ENCODE measurements at regions of chr6 and their contacts with region 1.

Region 1: DNA sequence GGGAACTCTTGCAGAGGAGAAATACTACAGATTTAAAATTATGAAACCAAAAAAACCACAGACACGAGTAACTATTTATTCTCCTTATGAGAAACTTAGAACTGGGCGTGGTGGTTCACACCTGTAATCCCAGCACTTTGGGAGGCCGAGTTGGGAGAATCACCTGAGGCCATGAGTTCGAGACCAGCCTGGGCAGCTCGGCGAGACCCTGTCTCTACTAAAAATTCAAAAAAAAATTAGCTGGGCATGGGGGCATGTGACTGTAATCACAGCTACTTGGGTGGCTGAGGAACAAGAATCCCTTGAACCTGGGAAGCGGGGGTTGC is 36.8 kb downstream of the SSR1 start:
- DNase-seq: no peak
- ATAC-seq: no peak
- H3K4me3 ChIP-seq: no peak overlapping the region
- H3K4me3 Mint-ChIP-seq: no peak overlapping the region
- H3K27ac ChIP-seq: no peak overlapping the region
- H3K27ac Mint-ChIP-seq: no peak overlapping the region
- H3K4me1 ChIP-seq: no peaks in the 10 kb centered on the region
- H3K4me1 Mint-ChIP-seq: peaks cover 6% of the 10 kb centered on the region
- H3K27me3 ChIP-seq: no peaks in the 10 kb centered on the region
- H3K27me3 Mint-ChIP-seq: no peaks in the 10 kb centered on the region
- CTCF ChIP-seq: peak; percentile 37

Region 2: DNA sequence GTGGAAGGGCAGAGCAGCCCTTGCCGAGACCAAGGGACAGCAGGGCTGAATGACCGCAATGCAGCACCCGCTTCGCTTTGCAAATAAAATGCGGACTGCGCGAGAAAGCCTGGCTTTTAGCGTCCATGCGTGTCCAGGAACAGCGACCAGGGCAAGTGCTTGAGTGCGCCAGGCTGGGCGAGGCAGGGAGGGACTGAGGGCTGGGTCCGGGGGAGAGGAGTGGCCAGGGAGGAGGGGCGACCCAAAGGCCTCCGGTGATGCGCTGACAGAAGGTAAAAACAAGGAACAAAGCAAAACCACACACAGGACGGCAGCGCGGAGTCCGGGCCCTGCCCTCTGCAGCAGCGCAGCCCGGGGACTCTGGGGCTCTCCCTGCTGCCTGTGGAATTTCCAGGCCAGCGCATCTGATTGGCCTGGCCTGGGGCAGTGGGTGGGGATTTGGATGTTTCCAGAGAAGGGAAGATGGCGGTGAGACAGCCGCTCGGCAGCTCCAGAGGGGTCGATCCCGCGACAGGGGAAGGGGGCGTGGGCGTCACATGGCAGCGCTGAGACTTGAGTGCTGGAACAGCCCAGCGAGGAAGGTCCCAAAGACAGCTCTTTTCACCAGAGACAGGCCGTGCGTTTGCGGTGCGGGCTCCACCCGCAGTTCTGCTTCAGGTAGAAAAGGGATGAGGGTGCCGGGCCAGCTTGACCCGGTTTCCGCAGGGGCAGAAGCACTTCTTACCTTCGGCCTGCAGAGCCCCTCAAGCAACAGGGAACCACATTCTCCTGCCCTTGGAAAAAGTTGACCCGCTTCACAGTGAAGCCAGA is 14.9 kb before region 1 on chr6:
- CTCF ChIA-PET with region 1: interaction called, 25 read pairs
- POLR2A ChIA-PET with region 1: no interaction called
- intact Hi-C with region 1: no loop called
- DNase-seq: peak in 4 of 9 experiments; percentile 8 to 51 (median 24)
- ATAC-seq: peak; percentile 62
- H3K4me3 ChIP-seq: peak overlapping the region; percentile 50 to 60
- H3K4me3 Mint-ChIP-seq: peak overlapping the region; percentile 87
- H3K27ac ChIP-seq: no peak overlapping the region
- H3K27ac Mint-ChIP-seq: no peak overlapping the region
- H3K4me1 ChIP-seq: peaks cover 14% of the 10 kb centered on the region
- H3K4me1 Mint-ChIP-seq: peaks cover 12% of the 10 kb centered on the region
- H3K27me3 ChIP-seq: no peaks in the 10 kb centered on the region
- H3K27me3 Mint-ChIP-seq: peaks cover 28% of the 10 kb centered on the region
- CTCF ChIP-seq: no peak

Region 3: GRCh38 chr6:7312616-7313504 is 36.7 kb after region 1 on chr6 and contains the start of gene SSR1:
- CTCF ChIA-PET with region 1: interaction called, 5 read pairs
- POLR2A ChIA-PET with region 1: no interaction called
- intact Hi-C with region 1: loop called in 1 of 2 experiments (anchors 1 kb)
- DNase-seq: peak; percentile 84 to 97 (median 93)
- ATAC-seq: peak; percentile 94
- H3K4me3 ChIP-seq: peak within 1 kb of the TSS; percentile 76 to 98
- H3K4me3 Mint-ChIP-seq: peak within 1 kb of the TSS; percentile 88
- H3K27ac ChIP-seq: peak within 1 kb of the TSS; percentile 71 to 84
- H3K27ac Mint-ChIP-seq: peak within 1 kb of the TSS; percentile 91
- H3K4me1 ChIP-seq: peaks cover 34% of the 10 kb centered on the region
- H3K4me1 Mint-ChIP-seq: peaks cover 53% of the 10 kb centered on the region
- H3K27me3 ChIP-seq: no peaks in the 10 kb centered on the region
- H3K27me3 Mint-ChIP-seq: no peaks in the 10 kb centered on the region
- CTCF ChIP-seq: no peak
- total RNA-seq, gene SSR1: 40.5 to 42.5 TPM

Region 4: DNA sequence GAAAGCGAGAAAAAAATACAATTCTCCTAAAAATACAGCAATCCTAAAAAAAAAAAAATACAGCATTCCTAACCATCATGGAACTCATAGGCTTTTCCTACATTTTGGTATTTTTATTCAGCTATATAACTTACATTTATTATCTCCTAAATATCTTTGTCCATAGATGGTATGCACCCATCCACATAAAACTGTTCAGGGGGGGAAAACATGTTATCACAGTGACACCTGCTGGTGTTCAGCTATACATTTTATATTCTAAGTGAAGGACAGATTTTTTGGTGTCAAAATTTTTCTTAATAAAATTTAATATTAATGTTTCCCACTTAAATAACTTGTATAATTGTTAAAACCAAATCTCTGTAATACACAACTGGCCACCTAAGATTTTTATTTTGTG is 730.0 kb after region 1 on chr6:
- CTCF ChIA-PET with region 1: interaction called, 3 read pairs
- POLR2A ChIA-PET with region 1: no interaction called
- intact Hi-C with region 1: loop called in 1 of 2 experiments (anchors 5 kb)
- DNase-seq: peak in 2 of 9 experiments; percentile 22 to 33
- ATAC-seq: no peak
- H3K4me3 ChIP-seq: no peak overlapping the region
- H3K4me3 Mint-ChIP-seq: no peak overlapping the region
- H3K27ac ChIP-seq: no peak overlapping the region
- H3K27ac Mint-ChIP-seq: no peak overlapping the region
- H3K4me1 ChIP-seq: no peaks in the 10 kb centered on the region
- H3K4me1 Mint-ChIP-seq: peaks cover 4% of the 10 kb centered on the region
- H3K27me3 ChIP-seq: no peaks in the 10 kb centered on the region
- H3K27me3 Mint-ChIP-seq: no peaks in the 10 kb centered on the region
- CTCF ChIP-seq: peak; percentile 33

Region 5: DNA sequence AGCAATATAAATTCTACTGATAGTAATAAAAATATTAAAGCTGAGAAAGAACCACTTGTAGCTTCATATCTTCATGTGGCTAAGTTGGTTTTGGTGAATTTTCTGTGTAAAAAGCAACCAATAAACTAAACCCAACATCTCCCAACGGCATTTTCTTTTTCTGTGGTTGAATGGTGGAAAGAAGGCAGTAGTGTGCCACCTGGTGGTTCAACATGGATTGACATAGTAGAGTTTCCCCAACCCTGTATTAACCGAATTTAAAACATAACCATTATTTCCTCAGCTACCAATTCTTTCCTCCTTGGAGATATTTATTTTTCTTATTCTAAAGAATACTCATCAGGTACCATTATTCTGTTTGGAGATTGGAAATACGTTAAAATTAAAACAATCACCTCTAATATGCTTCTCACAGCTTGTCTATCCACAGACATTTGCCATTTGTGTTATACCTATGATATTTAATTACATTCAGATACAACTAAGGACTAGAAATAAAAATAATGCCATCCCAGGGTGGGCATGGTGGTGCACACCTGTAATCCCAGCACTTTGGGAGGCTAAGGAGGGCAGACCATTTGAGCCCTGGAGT is 943.3 kb after region 1 on chr6:
- CTCF ChIA-PET with region 1: no interaction called
- POLR2A ChIA-PET with region 1: no interaction called
- intact Hi-C with region 1: loop called in 1 of 2 experiments (anchors 5 kb)
- DNase-seq: peak in 6 of 9 experiments; percentile 7 to 63 (median 36)
- ATAC-seq: peak; percentile 38
- H3K4me3 ChIP-seq: no peak overlapping the region
- H3K4me3 Mint-ChIP-seq: no peak overlapping the region
- H3K27ac ChIP-seq: no peak overlapping the region
- H3K27ac Mint-ChIP-seq: no peak overlapping the region
- H3K4me1 ChIP-seq: no peaks in the 10 kb centered on the region
- H3K4me1 Mint-ChIP-seq: no peaks in the 10 kb centered on the region
- H3K27me3 ChIP-seq: no peaks in the 10 kb centered on the region
- H3K27me3 Mint-ChIP-seq: peaks cover 8% of the 10 kb centered on the region
- CTCF ChIP-seq: peak; percentile 83

Measured in CD8-positive, alpha-beta T cell (primary cell).